Body of pancreas (tissue), 4 donors: ENCODE measurements at regions of chr5 and their contacts with region 1.

Region 1: GRCh38 chr5:1174122-1174936 is 27.1 kb upstream of the SLC6A19 start:
- DNase-seq: peak; percentile 65 to 75 (median 74)
- ATAC-seq: peak; percentile 88
- H3K4me3 ChIP-seq: no peak overlapping the region
- H3K27ac ChIP-seq: no peak overlapping the region
- H3K4me1 ChIP-seq: peaks cover 7% of the 10 kb centered on the region
- H3K27me3 ChIP-seq: no peaks in the 10 kb centered on the region
- CTCF ChIP-seq: peak; percentile 49 to 76 (median 64)
- POLR2A ChIP-seq: no peak

Region 2: DNA sequence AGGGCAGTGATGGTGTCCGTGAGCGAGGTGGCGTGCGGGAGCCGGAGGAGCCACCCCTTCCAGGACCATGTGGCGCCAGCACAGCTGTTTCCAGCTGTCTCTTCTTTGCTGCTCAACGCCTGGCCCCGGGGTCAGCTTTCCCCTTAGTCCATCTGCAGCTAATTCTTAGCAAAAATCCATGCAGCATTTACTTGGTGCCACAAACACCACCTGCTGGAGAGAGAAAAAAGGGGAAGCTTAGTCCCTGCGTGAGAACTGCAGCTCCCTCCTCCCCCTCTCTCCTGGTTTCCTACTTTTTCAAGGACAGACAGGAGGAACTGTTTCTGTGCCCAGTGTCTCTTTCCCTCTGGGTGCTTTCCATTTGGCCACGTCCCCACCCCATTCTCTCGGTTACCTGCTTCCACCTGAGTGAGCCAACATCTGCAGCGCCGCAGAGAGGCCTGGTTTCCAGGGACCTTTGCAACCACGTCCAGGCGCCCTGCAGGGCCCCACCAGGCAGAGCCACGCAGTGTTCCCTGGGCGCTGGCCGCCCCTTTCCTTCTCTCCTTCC is 30.4 kb after region 1 on chr5:
- intact Hi-C with region 1: loop called (anchors 5 kb)
- DNase-seq: peak; percentile 58 to 87 (median 78)
- ATAC-seq: peak; percentile 92
- H3K4me3 ChIP-seq: no peak overlapping the region
- H3K27ac ChIP-seq: peak overlapping the region in 3 of 4 donors; percentile 56 to 78 (median 67)
- H3K4me1 ChIP-seq: peaks cover 18% of the 10 kb centered on the region
- H3K27me3 ChIP-seq: no peaks in the 10 kb centered on the region
- CTCF ChIP-seq: peak; percentile 31 to 84 (median 76)
- POLR2A ChIP-seq: no peak

Region 3: DNA sequence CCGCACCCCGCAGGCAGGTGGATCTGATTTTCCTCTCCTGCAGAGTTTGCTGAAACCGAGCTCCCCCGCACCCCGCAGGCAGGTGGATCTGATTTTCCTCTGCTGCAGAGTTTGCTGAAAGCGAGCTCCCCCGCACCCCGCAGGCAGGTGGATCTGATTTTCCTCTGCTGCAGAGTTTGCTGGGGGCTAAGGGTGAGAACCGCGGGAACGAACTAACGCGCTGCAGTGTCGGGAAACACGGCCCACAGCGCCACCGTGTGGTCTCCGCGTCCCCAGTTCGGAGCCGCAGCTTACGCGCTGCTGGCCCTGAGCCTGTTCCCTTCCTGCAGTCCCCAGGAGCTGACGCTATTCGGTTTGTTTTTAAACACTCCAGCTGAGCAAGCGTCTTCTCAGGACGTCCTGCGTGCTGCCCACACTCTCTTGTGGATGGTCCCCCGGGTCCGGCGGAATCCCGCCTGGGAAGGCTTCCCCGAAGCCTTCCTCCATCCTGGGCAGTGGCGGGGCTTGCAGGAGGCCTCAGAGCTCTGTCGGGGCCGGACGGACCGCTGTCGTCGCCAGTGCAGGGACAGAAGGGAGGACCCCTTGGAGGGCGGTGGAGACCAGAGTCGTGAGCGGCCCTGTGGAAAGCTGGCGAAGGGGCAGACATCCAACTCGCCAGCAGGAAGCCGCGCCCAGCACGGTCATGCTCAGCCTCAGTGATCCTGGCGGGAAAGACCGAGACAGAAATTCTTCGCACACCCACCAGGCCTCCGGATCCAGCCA is 470.7 kb after region 1 on chr5:
- intact Hi-C with region 1: loop called (anchors 5 kb)
- DNase-seq: peak; percentile 81 to 86 (median 83)
- ATAC-seq: peak; percentile 91
- H3K4me3 ChIP-seq: no peak overlapping the region
- H3K27ac ChIP-seq: no peak overlapping the region
- H3K4me1 ChIP-seq: peaks cover 11% of the 10 kb centered on the region
- H3K27me3 ChIP-seq: peaks cover 0 to 23% of the 10 kb centered on the region in 2 donors
- CTCF ChIP-seq: peak; percentile 61 to 93 (median 86)
- POLR2A ChIP-seq: no peak